GM12878 (cell line): ENCODE measurements at regions of chr6 and their contacts with region 1.

Region 1: DNA sequence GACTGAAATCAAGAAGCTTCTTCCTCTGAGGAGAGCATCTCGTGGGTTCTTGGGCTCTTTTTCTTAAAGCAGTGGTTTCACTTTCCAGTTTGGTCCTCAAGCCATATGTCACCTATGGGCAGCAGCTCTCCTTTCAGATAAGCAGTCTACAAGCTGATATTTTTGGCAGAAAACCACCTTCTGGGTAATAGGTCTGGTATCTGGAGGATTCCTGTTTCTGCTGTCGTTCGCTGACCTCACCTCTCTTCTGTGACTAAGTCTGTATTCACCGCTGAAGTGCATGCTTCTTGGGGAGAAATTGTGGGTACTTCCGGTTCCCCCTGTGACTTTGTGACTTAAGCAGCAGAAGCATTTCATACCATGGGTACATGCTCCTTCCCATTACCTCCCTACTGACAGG is 193.6 kb downstream of the EDN1 start:
- DNase-seq: peak; percentile 64
- ATAC-seq: peak; percentile 94
- H3K4me3 ChIP-seq: peak overlapping the region; percentile 27; the same call in 1 of the 2 replicates
- H3K27ac ChIP-seq: no peak overlapping the region
- H3K4me1 ChIP-seq: peaks cover 7% of the 10 kb centered on the region; the same call in 1 of the 2 replicates
- H3K27me3 ChIP-seq: no peaks in the 10 kb centered on the region
- CTCF ChIP-seq: no peak
- EP300 ChIP-seq: no peak
- POLR2A ChIP-seq: no peak
- RAD21 ChIP-seq: no peak

Region 2: GRCh38 chr6:12313992-12314805 is 169.5 kb before region 1 on chr6:
- CTCF ChIA-PET with region 1: interaction called, 8 read pairs
- POLR2A ChIA-PET with region 1: no interaction called
- RAD21 ChIA-PET with region 1: interaction called, 6 read pairs
- SMC1A ChIA-PET with region 1: interaction called, 40 read pairs
- in situ Hi-C with region 1: no loop called
- intact Hi-C with region 1: no loop called
- DNase-seq: no peak
- ATAC-seq: no peak
- H3K4me3 ChIP-seq: no peak overlapping the region
- H3K27ac ChIP-seq: no peak overlapping the region
- H3K4me1 ChIP-seq: no peaks in the 10 kb centered on the region
- H3K27me3 ChIP-seq: no peaks in the 10 kb centered on the region
- CTCF ChIP-seq: no peak
- EP300 ChIP-seq: no peak
- POLR2A ChIP-seq: no peak
- RAD21 ChIP-seq: no peak

Region 3: DNA sequence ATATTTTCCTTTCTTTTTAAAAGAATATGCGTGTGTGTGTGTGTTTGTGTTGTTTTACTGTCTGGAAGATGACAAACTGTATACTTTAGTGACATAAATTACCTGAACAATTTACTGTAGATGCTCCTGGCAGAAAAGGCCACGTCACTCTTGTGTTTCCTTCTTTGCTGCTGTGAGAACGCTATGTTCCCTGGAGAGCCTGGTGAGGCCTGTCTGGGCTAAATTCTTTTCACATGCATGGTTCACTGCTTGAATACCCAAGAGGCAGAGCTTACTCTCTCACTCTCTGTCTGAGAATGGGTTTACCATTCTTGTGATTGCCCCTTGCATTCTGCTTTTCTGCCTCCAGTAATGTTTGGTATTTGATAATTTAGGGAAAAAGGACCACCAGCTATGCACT is 129.2 kb before region 1 on chr6:
- CTCF ChIA-PET with region 1: interaction called, 20 read pairs
- POLR2A ChIA-PET with region 1: interaction called, 9 read pairs
- RAD21 ChIA-PET with region 1: interaction called, 36 read pairs
- SMC1A ChIA-PET with region 1: interaction called, 48 read pairs
- in situ Hi-C with region 1: no loop called
- intact Hi-C with region 1: loop called (anchors 5 kb)
- DNase-seq: peak; percentile 91
- ATAC-seq: peak; percentile 77
- H3K4me3 ChIP-seq: no peak overlapping the region
- H3K27ac ChIP-seq: peak overlapping the region; percentile 56
- H3K4me1 ChIP-seq: peaks cover 47% of the 10 kb centered on the region
- H3K27me3 ChIP-seq: no peaks in the 10 kb centered on the region
- CTCF ChIP-seq: no peak
- EP300 ChIP-seq: peak; percentile 43 to 56; a peak in 2 of 4 replicates
- POLR2A ChIP-seq: no peak
- RAD21 ChIP-seq: no peak

Region 4: DNA sequence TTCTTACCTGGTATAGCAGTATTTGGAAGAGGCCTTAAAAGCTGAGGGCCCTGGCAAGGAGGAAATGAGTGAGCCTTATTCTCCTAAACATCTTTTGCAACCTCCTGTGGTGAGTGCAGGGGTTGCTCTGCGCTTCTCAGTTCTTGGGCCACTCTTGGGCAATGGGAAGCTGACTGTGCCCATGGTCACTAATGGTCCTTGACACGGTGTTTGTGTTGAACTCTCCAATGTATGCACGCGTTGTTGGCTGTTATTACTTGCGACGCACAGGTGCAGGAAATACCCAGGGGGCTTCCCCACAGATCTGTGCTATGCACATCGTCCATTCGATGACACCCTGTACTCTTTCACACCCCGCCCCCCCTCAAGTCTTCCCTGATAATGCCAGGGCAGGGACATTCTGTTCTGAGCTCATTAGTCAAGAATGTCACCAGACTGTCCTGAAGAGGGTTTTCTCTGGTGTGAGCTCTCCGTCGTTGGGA is 113.9 kb before region 1 on chr6:
- CTCF ChIA-PET with region 1: interaction called, 40 read pairs
- POLR2A ChIA-PET with region 1: interaction called, 9 read pairs
- RAD21 ChIA-PET with region 1: interaction called, 47 read pairs
- SMC1A ChIA-PET with region 1: interaction called, 43 read pairs
- in situ Hi-C with region 1: no loop called
- intact Hi-C with region 1: no loop called
- DNase-seq: peak; percentile 73
- ATAC-seq: peak; percentile 92
- H3K4me3 ChIP-seq: no peak overlapping the region
- H3K27ac ChIP-seq: peak overlapping the region; percentile 35
- H3K4me1 ChIP-seq: peaks cover 13% of the 10 kb centered on the region
- H3K27me3 ChIP-seq: no peaks in the 10 kb centered on the region
- CTCF ChIP-seq: peak; percentile 25 to 41 (median 30); a peak in 4 of 6 replicates
- EP300 ChIP-seq: peak; percentile 55 to 78; a peak in 2 of 4 replicates
- POLR2A ChIP-seq: no peak
- RAD21 ChIP-seq: peak; percentile 62

Region 5: GRCh38 chr6:12436683-12437082 is 47.0 kb before region 1 on chr6:
- CTCF ChIA-PET with region 1: interaction called, 3 read pairs
- POLR2A ChIA-PET with region 1: no interaction called
- RAD21 ChIA-PET with region 1: no interaction called
- SMC1A ChIA-PET with region 1: interaction called, 11 read pairs
- in situ Hi-C with region 1: no loop called
- intact Hi-C with region 1: no loop called
- DNase-seq: no peak
- ATAC-seq: no peak
- H3K4me3 ChIP-seq: no peak overlapping the region
- H3K27ac ChIP-seq: no peak overlapping the region
- H3K4me1 ChIP-seq: no peaks in the 10 kb centered on the region
- H3K27me3 ChIP-seq: no peaks in the 10 kb centered on the region
- CTCF ChIP-seq: no peak
- EP300 ChIP-seq: no peak
- POLR2A ChIP-seq: no peak
- RAD21 ChIP-seq: no peak

Region 6: DNA sequence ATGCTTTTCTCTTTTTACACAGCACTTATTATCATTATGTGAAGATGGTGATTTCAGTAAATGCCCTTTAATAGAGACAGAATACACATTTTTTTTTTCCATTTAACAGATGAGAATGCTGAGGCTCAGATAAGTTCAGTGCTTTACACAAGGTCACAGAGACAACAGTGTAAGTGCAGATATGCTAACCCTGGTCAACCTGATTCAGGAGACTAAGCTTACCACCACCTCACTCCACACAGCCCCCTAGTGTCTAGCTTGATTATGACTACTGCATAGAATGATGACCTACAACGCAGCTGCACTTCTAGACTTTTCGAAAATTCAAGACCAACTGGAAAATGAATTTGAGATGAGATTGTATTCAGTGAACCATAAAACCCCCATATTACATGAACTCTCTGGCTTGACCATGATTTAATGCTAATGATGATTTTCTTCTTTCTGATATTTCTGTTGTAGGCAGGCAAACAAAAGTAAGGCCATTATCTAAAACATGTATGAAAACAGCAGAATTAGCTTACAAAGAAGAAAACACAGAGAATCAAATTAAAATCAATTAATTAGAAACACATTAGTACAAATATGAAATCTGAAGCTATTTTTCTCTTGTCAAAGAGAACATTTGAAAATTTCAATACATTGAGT is 20.7 kb after region 1 on chr6:
- CTCF ChIA-PET with region 1: interaction called, 34 read pairs
- POLR2A ChIA-PET with region 1: interaction called, 3 read pairs
- RAD21 ChIA-PET with region 1: interaction called, 41 read pairs
- SMC1A ChIA-PET with region 1: interaction called, 66 read pairs
- in situ Hi-C with region 1: no loop called
- intact Hi-C with region 1: no loop called
- DNase-seq: peak; percentile 32
- ATAC-seq: peak; percentile 99
- H3K4me3 ChIP-seq: no peak overlapping the region
- H3K27ac ChIP-seq: no peak overlapping the region
- H3K4me1 ChIP-seq: no peaks in the 10 kb centered on the region
- H3K27me3 ChIP-seq: no peaks in the 10 kb centered on the region
- CTCF ChIP-seq: peak; percentile 58 to 76 (median 68)
- EP300 ChIP-seq: no peak
- POLR2A ChIP-seq: no peak
- RAD21 ChIP-seq: peak; percentile 65